ENCODE measurements at regions of chr11 and their contacts with region 1.

Region 1: GRCh38 chr11:126163074-126163700 is 48.3 kb downstream of the RPUSD4 start:
- DNase-seq: peak; percentile 87
- H3K4me3 ChIP-seq: no peak overlapping the region
- H3K27ac ChIP-seq: peak overlapping the region; percentile 33 to 84 (median 56)
- H3K4me1 ChIP-seq: peaks cover 2 to 58% (median 46%) of the 10 kb centered on the region in 4 donors
- H3K27me3 ChIP-seq: no peaks in the 10 kb centered on the region
- CTCF ChIP-seq: no peak
- EP300 ChIP-seq: peak in 2 of 4 donors; percentile 33 to 90
- POLR2A ChIP-seq: no peak

Region 2: DNA sequence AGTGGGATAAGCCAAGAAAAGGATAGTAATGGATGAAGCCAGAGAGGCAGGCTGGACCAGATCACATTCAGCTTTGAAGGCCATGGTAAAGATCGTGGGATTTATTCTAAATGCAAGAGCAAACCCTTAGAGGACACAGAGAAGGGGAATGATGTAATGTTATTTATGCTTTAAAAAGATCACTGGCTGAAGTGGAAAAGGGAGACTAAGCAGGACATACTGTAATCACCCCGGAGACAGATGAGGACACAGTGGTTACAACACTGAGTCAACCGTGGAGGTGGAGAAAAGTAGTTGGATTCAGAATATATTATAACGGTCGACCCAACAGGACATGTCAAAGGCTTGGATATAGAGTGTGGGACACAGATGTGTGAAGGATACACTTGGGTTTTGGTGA is 139.1 kb before region 1 on chr11:
- intact Hi-C with region 1: loop called (anchors 5 kb)
- DNase-seq: peak; percentile 72
- H3K4me3 ChIP-seq: no peak overlapping the region
- H3K27ac ChIP-seq: peak overlapping the region; percentile 61 to 81 (median 79)
- H3K4me1 ChIP-seq: peaks cover 0 to 81% (median 57%) of the 10 kb centered on the region in 4 donors
- H3K27me3 ChIP-seq: no peaks in the 10 kb centered on the region
- CTCF ChIP-seq: no peak
- EP300 ChIP-seq: peak in 2 of 4 donors; percentile 70 to 85
- POLR2A ChIP-seq: no peak

Region 3: DNA sequence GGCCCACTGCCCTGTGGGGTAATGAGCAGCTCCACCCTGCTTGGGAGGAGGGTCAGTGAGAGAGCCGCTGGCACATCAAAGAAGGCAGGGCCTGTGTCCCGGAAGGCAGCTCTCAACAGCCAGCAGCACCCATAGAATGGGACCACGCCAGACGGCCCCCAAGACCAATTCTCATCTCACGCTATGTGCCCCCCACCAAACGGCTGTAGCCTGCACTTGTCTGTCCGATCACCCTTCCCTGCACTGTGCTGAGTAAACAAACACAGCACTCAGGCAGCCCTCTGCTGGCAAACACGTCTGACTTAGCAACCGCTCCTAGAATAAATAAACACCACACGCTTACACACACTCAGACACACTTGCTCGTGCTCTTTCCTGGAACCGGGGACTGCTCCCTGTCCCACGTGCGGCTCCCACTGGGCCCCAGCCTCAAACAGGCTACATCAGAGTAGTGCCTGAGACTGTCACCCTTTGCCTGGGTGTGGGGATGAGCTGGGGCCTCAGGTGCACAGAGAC is 47.3 kb before region 1 on chr11:
- intact Hi-C with region 1: loop called (anchors 2 kb)
- DNase-seq: peak; percentile 92
- H3K4me3 ChIP-seq: no peak overlapping the region
- H3K27ac ChIP-seq: peak overlapping the region; percentile 85 to 91 (median 89)
- H3K4me1 ChIP-seq: peaks cover 0 to 63% (median 60%) of the 10 kb centered on the region in 4 donors
- H3K27me3 ChIP-seq: no peaks in the 10 kb centered on the region
- CTCF ChIP-seq: peak in 3 of 4 experiments; percentile 8 to 33 (median 28)
- EP300 ChIP-seq: peak in 2 of 4 donors; percentile 74 to 77
- POLR2A ChIP-seq: no peak

Region 4: DNA sequence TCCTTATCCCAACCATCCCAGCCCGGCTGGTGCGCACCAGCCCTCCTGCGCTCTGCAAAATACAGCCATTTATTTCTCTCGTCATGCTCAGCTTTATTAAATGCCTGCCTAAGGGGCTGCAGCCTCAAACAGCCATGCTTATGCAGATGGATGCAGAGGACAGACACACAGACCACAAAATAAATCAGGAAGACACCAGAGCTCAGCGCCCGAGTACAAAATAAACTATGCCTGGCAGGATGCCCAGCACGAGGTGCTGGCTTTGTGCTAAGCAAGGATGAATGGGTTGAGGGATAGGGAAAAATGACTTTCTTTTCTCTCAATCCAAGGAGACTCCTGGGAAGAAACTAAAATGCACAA is 22.3 kb before region 1 on chr11:
- intact Hi-C with region 1: loop called (anchors 2 kb)
- DNase-seq: peak; percentile 94
- H3K4me3 ChIP-seq: peak overlapping the region in 2 of 4 donors; percentile 5 to 19
- H3K27ac ChIP-seq: peak overlapping the region; percentile 69 to 91 (median 88)
- H3K4me1 ChIP-seq: peaks cover 0 to 66% (median 58%) of the 10 kb centered on the region in 4 donors
- H3K27me3 ChIP-seq: no peaks in the 10 kb centered on the region
- CTCF ChIP-seq: no peak
- EP300 ChIP-seq: peak in 3 of 4 donors; percentile 56 to 69 (median 69)
- POLR2A ChIP-seq: no peak

Measured in sigmoid colon (tissue), 7 donors.